Panc1 (cell line): ENCODE measurements at regions of chr2 and their contacts with region 1.

Region 1: GRCh38 chr2:50133766-50134165 is 898.2 kb downstream of the NRXN1 start:
- DNase-seq: no peak
- ATAC-seq: no peak
- H3K4me3 ChIP-seq: no peak overlapping the region
- H3K27ac ChIP-seq: no peak overlapping the region
- H3K4me1 ChIP-seq: no peaks in the 10 kb centered on the region
- H3K27me3 ChIP-seq: no peaks in the 10 kb centered on the region
- CTCF ChIP-seq: no peak

Region 2: DNA sequence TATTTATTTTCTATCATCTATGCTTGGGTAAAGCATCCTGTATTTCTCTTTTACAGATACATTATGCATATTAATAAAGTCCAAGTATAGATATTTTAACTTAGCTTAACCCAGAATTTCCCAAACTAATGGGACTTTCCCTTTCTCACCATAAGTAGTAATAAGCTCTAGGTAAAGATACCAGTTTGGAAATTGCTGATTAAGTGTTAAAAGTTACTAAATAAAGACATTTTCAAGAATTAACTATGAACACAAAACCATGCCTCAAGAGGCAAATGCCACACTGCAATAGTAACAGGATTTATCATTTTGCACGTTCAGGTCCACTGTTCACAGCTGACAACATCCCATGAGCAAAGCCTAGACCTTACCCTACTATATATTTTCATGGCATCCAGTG is 44.8 kb before region 1 on chr2:
- CTCF ChIA-PET with region 1: no interaction called
- POLR2A ChIA-PET with region 1: interaction called, 16 read pairs
- in situ Hi-C with region 1: no loop called
- intact Hi-C with region 1: no loop called
- DNase-seq: no peak
- ATAC-seq: no peak
- H3K4me3 ChIP-seq: no peak overlapping the region
- H3K27ac ChIP-seq: no peak overlapping the region
- H3K4me1 ChIP-seq: no peaks in the 10 kb centered on the region
- H3K27me3 ChIP-seq: no peaks in the 10 kb centered on the region
- CTCF ChIP-seq: no peak

Region 3: GRCh38 chr2:50118905-50119702 is 14.7 kb before region 1 on chr2:
- CTCF ChIA-PET with region 1: no interaction called
- POLR2A ChIA-PET with region 1: no interaction called
- in situ Hi-C with region 1: no loop called
- intact Hi-C with region 1: no loop called
- DNase-seq: no peak
- ATAC-seq: no peak
- H3K4me3 ChIP-seq: no peak overlapping the region
- H3K27ac ChIP-seq: no peak overlapping the region
- H3K4me1 ChIP-seq: no peaks in the 10 kb centered on the region
- H3K27me3 ChIP-seq: no peaks in the 10 kb centered on the region
- CTCF ChIP-seq: no peak

Region 4: DNA sequence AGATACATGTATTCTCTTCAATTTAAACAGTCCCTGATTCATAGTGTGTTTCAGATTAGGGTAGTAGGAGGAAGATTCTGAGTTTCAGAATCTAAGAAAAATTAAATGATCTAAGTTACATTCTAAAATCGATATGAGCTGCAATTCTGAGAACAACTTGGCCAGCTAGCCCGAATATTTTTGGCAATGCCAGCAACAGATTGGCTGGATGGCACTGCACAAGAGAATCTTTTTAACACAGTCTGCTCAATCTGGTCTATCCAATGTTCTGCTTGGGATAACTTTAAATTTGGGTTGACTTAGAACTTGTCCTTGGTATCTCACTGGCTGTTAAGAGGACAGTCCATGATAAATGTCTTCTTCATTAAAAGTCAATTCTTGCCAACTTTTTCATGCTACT is 44.3 kb after region 1 on chr2:
- CTCF ChIA-PET with region 1: no interaction called
- POLR2A ChIA-PET with region 1: no interaction called
- in situ Hi-C with region 1: no loop called
- intact Hi-C with region 1: no loop called
- DNase-seq: no peak
- ATAC-seq: no peak
- H3K4me3 ChIP-seq: no peak overlapping the region
- H3K27ac ChIP-seq: no peak overlapping the region
- H3K4me1 ChIP-seq: no peaks in the 10 kb centered on the region
- H3K27me3 ChIP-seq: no peaks in the 10 kb centered on the region
- CTCF ChIP-seq: no peak